A673 (cell line): ENCODE measurements at regions of chr10 and their contacts with region 1.

Region 1: GRCh38 chr10:55263327-55263726 is 462.3 kb upstream of the PCDH15 start:
- DNase-seq: no peak
- H3K4me3 ChIP-seq: no peak overlapping the region
- H3K27ac ChIP-seq: no peak overlapping the region
- H3K4me1 ChIP-seq: no peaks in the 10 kb centered on the region
- H3K27me3 ChIP-seq: no peaks in the 10 kb centered on the region
- CTCF ChIP-seq: no peak

Region 2: GRCh38 chr10:55091691-55092328 is 171.5 kb before region 1 on chr10:
- CTCF ChIA-PET with region 1: no interaction called
- POLR2A ChIA-PET with region 1: no interaction called
- intact Hi-C with region 1: loop called (anchors 5 kb)
- DNase-seq: peak; percentile 7
- H3K4me3 ChIP-seq: no peak overlapping the region
- H3K27ac ChIP-seq: no peak overlapping the region
- H3K4me1 ChIP-seq: no peaks in the 10 kb centered on the region
- H3K27me3 ChIP-seq: no peaks in the 10 kb centered on the region
- CTCF ChIP-seq: peak; percentile 71

Region 3: GRCh38 chr10:55183993-55184392 is 79.3 kb before region 1 on chr10:
- CTCF ChIA-PET with region 1: no interaction called
- POLR2A ChIA-PET with region 1: no interaction called
- intact Hi-C with region 1: no loop called
- DNase-seq: no peak
- H3K4me3 ChIP-seq: no peak overlapping the region
- H3K27ac ChIP-seq: no peak overlapping the region
- H3K4me1 ChIP-seq: no peaks in the 10 kb centered on the region
- H3K27me3 ChIP-seq: no peaks in the 10 kb centered on the region
- CTCF ChIP-seq: no peak